B cell (primary cell): ENCODE measurements at regions of chr1 and their contacts with region 1.

Region 1: GRCh38 chr1:40862008-40862863 is at the start of gene CITED4:
- DNase-seq: peak; percentile 96
- ATAC-seq: peak; percentile 98
- H3K4me3 ChIP-seq: peak within 1 kb of the TSS; percentile 17 to 67 (median 58)
- H3K4me3 Mint-ChIP-seq: peak within 1 kb of the TSS; percentile 98
- H3K27ac ChIP-seq: peak within 1 kb of the TSS in 1 of 2 donors; percentile 23
- H3K27ac Mint-ChIP-seq: peak within 1 kb of the TSS; percentile 88
- H3K4me1 ChIP-seq: peaks cover 11 to 14% of the 10 kb centered on the region in 2 donors
- H3K4me1 Mint-ChIP-seq: peaks cover 9% of the 10 kb centered on the region
- H3K27me3 ChIP-seq: peaks cover 0 to 28% (median 9%) of the 10 kb centered on the region in 4 experiments
- H3K27me3 Mint-ChIP-seq: peaks cover 25% of the 10 kb centered on the region
- CTCF ChIP-seq: no peak
- total RNA-seq, gene CITED4: 3.1 and 3.2 TPM in 2 replicates

Region 2: GRCh38 chr1:40563266-40563665 is 299.0 kb before region 1 on chr1:
- CTCF ChIA-PET with region 1: no interaction called
- POLR2A ChIA-PET with region 1: no interaction called
- intact Hi-C with region 1: no loop called
- DNase-seq: no peak
- ATAC-seq: no peak
- H3K4me3 ChIP-seq: no peak overlapping the region
- H3K4me3 Mint-ChIP-seq: no peak overlapping the region
- H3K27ac ChIP-seq: no peak overlapping the region
- H3K27ac Mint-ChIP-seq: no peak overlapping the region
- H3K4me1 ChIP-seq: no peaks in the 10 kb centered on the region
- H3K4me1 Mint-ChIP-seq: no peaks in the 10 kb centered on the region
- H3K27me3 ChIP-seq: peaks cover 0 to 2% (median 0%) of the 10 kb centered on the region in 4 experiments
- H3K27me3 Mint-ChIP-seq: peaks cover 21% of the 10 kb centered on the region
- CTCF ChIP-seq: no peak

Region 3: GRCh38 chr1:40802078-40802741 is 60.0 kb before region 1 on chr1:
- CTCF ChIA-PET with region 1: no interaction called
- POLR2A ChIA-PET with region 1: no interaction called
- intact Hi-C with region 1: loop called (anchors 1 kb)
- DNase-seq: peak; percentile 88
- ATAC-seq: peak; percentile 95
- H3K4me3 ChIP-seq: peak overlapping the region; percentile 45 to 89 (median 58)
- H3K4me3 Mint-ChIP-seq: peak overlapping the region; percentile 86
- H3K27ac ChIP-seq: peak overlapping the region; percentile 25 to 39
- H3K27ac Mint-ChIP-seq: no peak overlapping the region
- H3K4me1 ChIP-seq: peaks cover 16 to 40% of the 10 kb centered on the region in 2 donors
- H3K4me1 Mint-ChIP-seq: peaks cover 30% of the 10 kb centered on the region
- H3K27me3 ChIP-seq: no peaks in the 10 kb centered on the region
- H3K27me3 Mint-ChIP-seq: no peaks in the 10 kb centered on the region
- CTCF ChIP-seq: no peak

Region 4: DNA sequence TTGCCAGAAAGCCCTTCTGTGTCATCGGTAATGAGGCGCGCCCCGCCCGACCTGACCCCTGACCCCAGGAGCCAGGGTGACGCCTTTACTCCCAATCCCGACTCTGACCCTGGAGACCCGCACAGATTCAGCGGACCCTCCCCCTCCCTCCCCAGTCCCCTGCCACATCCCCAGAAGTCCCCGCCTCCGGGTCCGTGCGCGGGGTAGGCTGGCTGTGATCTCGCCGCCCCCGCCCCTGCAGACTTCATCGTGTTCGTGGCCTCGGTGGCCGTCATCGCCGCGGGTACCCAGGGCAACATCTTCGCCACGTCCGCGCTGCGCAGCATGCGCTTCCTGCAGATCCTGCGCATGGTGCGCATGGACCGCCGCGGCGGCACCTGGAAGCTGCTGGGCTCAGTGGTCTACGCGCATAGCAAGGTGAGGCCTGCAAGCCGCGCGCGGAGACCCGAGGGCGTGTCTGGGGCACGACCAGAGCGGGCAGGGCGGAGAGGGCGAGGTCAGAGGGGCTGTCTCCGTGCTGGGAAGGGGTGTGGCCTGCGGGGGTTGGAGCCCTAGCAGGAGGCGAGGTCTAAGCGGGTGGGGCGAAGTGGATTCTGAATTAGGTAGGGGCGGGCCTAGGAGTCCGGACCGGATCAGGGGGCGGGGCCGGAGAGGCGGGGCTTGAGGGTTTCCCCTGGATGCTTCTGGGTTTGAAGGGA is 43.8 kb before region 1 on chr1:
- CTCF ChIA-PET with region 1: no interaction called
- POLR2A ChIA-PET with region 1: no interaction called
- intact Hi-C with region 1: loop called (anchors 1 kb)
- DNase-seq: peak; percentile 91
- ATAC-seq: peak; percentile 99
- H3K4me3 ChIP-seq: peak overlapping the region; percentile 5 to 77 (median 62)
- H3K4me3 Mint-ChIP-seq: peak overlapping the region; percentile 88
- H3K27ac ChIP-seq: peak overlapping the region in 1 of 2 donors; percentile 10
- H3K27ac Mint-ChIP-seq: peak overlapping the region; percentile 79
- H3K4me1 ChIP-seq: peaks cover 0 to 11% of the 10 kb centered on the region in 2 donors
- H3K4me1 Mint-ChIP-seq: peaks cover 11% of the 10 kb centered on the region
- H3K27me3 ChIP-seq: peaks cover 0 to 6% (median 0%) of the 10 kb centered on the region in 4 experiments
- H3K27me3 Mint-ChIP-seq: no peaks in the 10 kb centered on the region
- CTCF ChIP-seq: no peak

Region 5: GRCh38 chr1:40979233-40980067 is 117.2 kb after region 1 on chr1 and contains the start of gene CTPS1:
- CTCF ChIA-PET with region 1: interaction called, 3 read pairs
- POLR2A ChIA-PET with region 1: interaction called, 3 read pairs
- intact Hi-C with region 1: loop called (anchors 1 kb)
- DNase-seq: peak; percentile 97
- ATAC-seq: peak; percentile 86
- H3K4me3 ChIP-seq: peak within 1 kb of the TSS; percentile 45 to 89 (median 82)
- H3K4me3 Mint-ChIP-seq: peak within 1 kb of the TSS; percentile 97
- H3K27ac ChIP-seq: peak within 1 kb of the TSS; percentile 82 to 87
- H3K27ac Mint-ChIP-seq: peak within 1 kb of the TSS; percentile 94
- H3K4me1 ChIP-seq: peaks cover 13 to 18% of the 10 kb centered on the region in 2 donors
- H3K4me1 Mint-ChIP-seq: peaks cover 15% of the 10 kb centered on the region
- H3K27me3 ChIP-seq: no peaks in the 10 kb centered on the region
- H3K27me3 Mint-ChIP-seq: no peaks in the 10 kb centered on the region
- CTCF ChIP-seq: peak; percentile 13
- total RNA-seq, gene CTPS1: 17.9 TPM in 2 replicates

Region 6: GRCh38 chr1:41053316-41053715 is 191.1 kb after region 1 on chr1:
- CTCF ChIA-PET with region 1: no interaction called
- POLR2A ChIA-PET with region 1: no interaction called
- intact Hi-C with region 1: no loop called
- DNase-seq: no peak
- ATAC-seq: no peak
- H3K4me3 ChIP-seq: no peak overlapping the region
- H3K4me3 Mint-ChIP-seq: no peak overlapping the region
- H3K27ac ChIP-seq: no peak overlapping the region
- H3K27ac Mint-ChIP-seq: peak overlapping the region; percentile 59
- H3K4me1 ChIP-seq: peaks cover 0 to 4% of the 10 kb centered on the region in 2 donors
- H3K4me1 Mint-ChIP-seq: peaks cover 6% of the 10 kb centered on the region
- H3K27me3 ChIP-seq: no peaks in the 10 kb centered on the region
- H3K27me3 Mint-ChIP-seq: no peaks in the 10 kb centered on the region
- CTCF ChIP-seq: no peak